Sigmoid colon (tissue), 7 donors: ENCODE measurements at regions of chr2 and their contacts with region 1.

Region 1: DNA sequence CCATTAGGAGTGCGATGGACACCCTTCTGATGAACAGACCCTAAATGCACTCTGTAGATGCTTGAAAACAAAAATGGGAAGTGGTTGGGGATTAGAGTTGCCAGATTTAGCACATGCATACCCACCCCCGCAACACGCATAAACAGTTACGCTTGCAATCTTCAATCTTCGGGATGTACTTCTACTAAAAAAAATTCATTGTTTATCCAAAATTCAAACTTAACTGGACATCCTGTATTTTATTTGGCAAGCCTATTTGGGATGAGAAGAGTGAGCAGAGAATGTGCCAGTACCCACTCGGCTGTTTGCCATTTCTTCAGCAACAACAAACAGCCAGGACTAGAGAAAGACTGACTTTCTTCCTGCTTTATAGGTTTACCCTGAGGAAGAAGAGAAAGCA is 18.4 kb downstream of the KIAA2012 start:
- DNase-seq: no peak
- H3K4me3 ChIP-seq: no peak overlapping the region
- H3K27ac ChIP-seq: peak overlapping the region in 3 of 4 donors; percentile 68 to 72 (median 70)
- H3K4me1 ChIP-seq: peaks cover 0 to 27% (median 20%) of the 10 kb centered on the region in 4 donors
- H3K27me3 ChIP-seq: no peaks in the 10 kb centered on the region
- CTCF ChIP-seq: no peak
- EP300 ChIP-seq: no peak
- POLR2A ChIP-seq: no peak

Region 2: DNA sequence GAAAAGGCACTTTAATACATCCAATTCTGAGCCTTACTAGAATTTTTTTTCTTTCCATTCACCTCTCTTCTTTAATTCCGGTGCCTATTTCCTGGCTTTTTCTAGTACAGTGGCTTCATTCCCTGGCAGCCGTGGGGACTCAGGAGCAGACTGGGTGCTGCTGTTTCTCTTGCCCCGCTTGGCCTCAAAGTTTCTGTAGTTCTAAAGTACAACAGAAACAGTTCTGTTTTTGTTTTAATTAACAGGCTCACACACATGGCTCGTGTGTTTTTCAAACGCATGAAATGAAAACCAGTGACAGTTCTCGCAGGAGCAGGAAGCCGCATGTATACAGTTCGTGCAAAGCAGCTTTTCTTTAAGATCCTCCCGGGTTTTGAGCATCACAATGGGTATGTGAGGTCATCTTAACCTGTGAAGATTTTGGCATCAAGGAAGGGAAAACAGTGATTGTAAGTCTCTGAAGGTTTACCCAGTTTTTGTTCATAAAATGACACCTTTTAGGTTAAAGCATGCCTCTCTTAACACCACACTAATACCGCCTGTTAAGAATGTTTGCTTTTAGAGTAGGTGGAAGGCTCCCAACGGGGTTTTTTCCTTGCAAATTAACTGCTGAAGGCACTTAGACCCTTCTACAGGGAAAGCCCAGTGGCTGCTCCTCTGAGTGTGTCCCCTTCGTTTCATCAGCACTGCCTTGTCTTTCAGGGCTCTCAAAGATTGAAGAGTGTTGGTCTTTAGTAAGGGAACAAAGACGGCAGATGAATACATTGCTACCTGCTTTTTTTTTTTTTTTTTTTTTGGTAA is 52.0 kb before region 1 on chr2:
- intact Hi-C with region 1: loop called (anchors 5 kb)
- DNase-seq: no peak
- H3K4me3 ChIP-seq: peak overlapping the region; percentile 69 to 84 (median 74)
- H3K27ac ChIP-seq: peak overlapping the region; percentile 96 to 99 (median 98)
- H3K4me1 ChIP-seq: peaks cover 0 to 41% (median 24%) of the 10 kb centered on the region in 4 donors
- H3K27me3 ChIP-seq: peaks cover 0 to 5% (median 0%) of the 10 kb centered on the region in 3 donors
- CTCF ChIP-seq: no peak
- EP300 ChIP-seq: no peak
- POLR2A ChIP-seq: no peak

Region 3: DNA sequence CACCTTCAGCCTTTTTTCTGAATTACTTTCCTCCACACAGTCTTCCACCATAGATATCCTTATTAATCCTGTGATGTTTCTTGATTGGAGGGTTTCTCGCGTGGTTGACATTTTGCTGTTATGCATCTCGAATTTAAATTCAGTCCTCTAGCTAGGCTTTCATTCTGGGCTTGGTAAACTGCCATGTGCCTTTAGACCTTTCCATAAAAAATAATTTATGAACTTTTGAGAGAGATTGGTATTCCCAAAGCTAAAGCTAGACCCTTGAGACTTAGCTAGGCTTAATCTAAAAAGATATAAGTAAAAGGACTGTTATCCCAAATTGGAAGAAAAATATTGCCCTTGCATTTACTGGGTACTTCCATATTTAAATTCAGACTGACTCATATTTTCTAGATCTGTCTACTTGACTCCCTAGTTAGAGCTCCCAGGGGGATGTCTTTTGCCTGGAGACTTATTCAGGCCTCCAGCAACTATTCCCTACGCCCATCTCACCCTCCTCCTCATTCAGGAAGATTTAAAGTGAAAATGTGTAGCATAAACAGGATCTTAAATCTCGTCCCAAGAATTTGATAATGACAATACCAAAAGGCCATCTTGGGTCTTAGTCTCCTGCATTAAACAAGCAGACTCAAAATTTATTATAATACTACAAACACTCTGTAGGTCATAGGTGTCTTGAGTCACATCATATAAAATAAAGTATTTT is 41.9 kb after region 1 on chr2:
- intact Hi-C with region 1: loop called (anchors 5 kb)
- DNase-seq: no peak
- H3K4me3 ChIP-seq: no peak overlapping the region
- H3K27ac ChIP-seq: no peak overlapping the region
- H3K4me1 ChIP-seq: peaks cover 0 to 29% (median 22%) of the 10 kb centered on the region in 4 donors
- H3K27me3 ChIP-seq: no peaks in the 10 kb centered on the region
- CTCF ChIP-seq: no peak
- EP300 ChIP-seq: no peak
- POLR2A ChIP-seq: no peak